ENCODE measurements at regions of chr5 and their contacts with region 1.

Region 1: GRCh38 chr5:177491429-177491945 is 5.9 kb downstream of the PDLIM7 start:
- DNase-seq: peak; percentile 94 to 97 (median 96)
- ATAC-seq: peak; percentile 87
- H3K4me3 ChIP-seq: no peak overlapping the region
- H3K27ac ChIP-seq: peak overlapping the region; percentile 23; the same call in 1 of the 3 replicates
- H3K4me1 ChIP-seq: peaks cover 40 to 79% of the 10 kb centered on the region in 2 experiments
- H3K27me3 ChIP-seq: no peaks in the 10 kb centered on the region
- CTCF ChIP-seq: peak; percentile 97 to 99 (median 98)
- EP300 ChIP-seq: 0 out of 2 replicates have a peak, but pooled peaks have one; percentile 10
- POLR2A ChIP-seq: no peak
- RAD21 ChIP-seq: peak; percentile 75 to 93

Region 2: DNA sequence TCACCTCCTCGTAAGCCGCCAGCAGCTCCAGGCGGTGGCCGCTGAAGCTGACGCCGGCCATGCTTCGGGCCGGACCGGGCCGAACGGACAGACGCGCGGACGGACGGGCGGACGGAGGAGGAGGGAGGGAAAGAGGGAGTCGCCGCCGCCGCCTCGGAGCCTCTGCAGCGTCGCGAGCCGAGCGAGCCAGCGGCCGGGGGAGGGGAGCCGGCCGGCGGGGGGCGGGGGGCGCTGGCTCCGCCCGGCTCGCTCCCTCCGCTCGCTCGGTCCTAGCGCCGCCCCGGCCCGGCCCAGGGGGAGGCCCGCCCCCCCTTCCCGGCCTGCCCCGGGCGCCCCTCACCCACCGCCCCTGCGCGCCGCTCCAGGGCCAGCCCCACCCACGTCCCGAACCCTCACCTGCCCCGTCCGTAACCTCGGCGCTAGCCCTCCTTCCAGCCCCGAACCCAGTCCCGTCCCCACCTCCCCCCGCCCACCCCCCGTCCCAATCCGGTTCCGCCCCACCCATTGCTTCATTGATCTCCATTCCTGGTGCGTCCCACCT is 18.0 kb before region 1 on chr5 and contains the start of gene DBN1:
- CTCF ChIA-PET with region 1: interaction called, 3 read pairs
- POLR2A ChIA-PET with region 1: interaction called, 30 read pairs
- in situ Hi-C with region 1: no loop called
- intact Hi-C with region 1: no loop called
- DNase-seq: peak; percentile 70 to 96 (median 94)
- ATAC-seq: peak; percentile 85
- H3K4me3 ChIP-seq: peak within 1 kb of the TSS; percentile 65
- H3K27ac ChIP-seq: peak within 1 kb of the TSS; percentile 79
- H3K4me1 ChIP-seq: peaks cover 21 to 71% of the 10 kb centered on the region in 2 experiments
- H3K27me3 ChIP-seq: no peaks in the 10 kb centered on the region
- CTCF ChIP-seq: no peak
- EP300 ChIP-seq: no peak
- POLR2A ChIP-seq: no peak
- RAD21 ChIP-seq: no peak
- polyA plus RNA-seq, gene DBN1: 0.25 to 0.34 TPM

Region 3: GRCh38 chr5:177478711-177479646 is 12.5 kb before region 1 on chr5:
- CTCF ChIA-PET with region 1: interaction called, 4 read pairs
- POLR2A ChIA-PET with region 1: interaction called, 30 read pairs
- in situ Hi-C with region 1: no loop called
- intact Hi-C with region 1: no loop called
- DNase-seq: no peak
- ATAC-seq: peak; percentile 31
- H3K4me3 ChIP-seq: no peak overlapping the region
- H3K27ac ChIP-seq: peak overlapping the region; percentile 62; the same call in 2 of the 3 replicates
- H3K4me1 ChIP-seq: peaks cover 33 to 46% of the 10 kb centered on the region in 2 experiments
- H3K27me3 ChIP-seq: no peaks in the 10 kb centered on the region
- CTCF ChIP-seq: no peak
- EP300 ChIP-seq: no peak
- POLR2A ChIP-seq: 0 out of 2 replicates have a peak, but pooled peaks have one; percentile 9
- RAD21 ChIP-seq: no peak

Measured in K562 (cell line).